CD8-positive, alpha-beta T cell (primary cell): ENCODE measurements at regions of chr22 and their contacts with region 1.

Region 1: DNA sequence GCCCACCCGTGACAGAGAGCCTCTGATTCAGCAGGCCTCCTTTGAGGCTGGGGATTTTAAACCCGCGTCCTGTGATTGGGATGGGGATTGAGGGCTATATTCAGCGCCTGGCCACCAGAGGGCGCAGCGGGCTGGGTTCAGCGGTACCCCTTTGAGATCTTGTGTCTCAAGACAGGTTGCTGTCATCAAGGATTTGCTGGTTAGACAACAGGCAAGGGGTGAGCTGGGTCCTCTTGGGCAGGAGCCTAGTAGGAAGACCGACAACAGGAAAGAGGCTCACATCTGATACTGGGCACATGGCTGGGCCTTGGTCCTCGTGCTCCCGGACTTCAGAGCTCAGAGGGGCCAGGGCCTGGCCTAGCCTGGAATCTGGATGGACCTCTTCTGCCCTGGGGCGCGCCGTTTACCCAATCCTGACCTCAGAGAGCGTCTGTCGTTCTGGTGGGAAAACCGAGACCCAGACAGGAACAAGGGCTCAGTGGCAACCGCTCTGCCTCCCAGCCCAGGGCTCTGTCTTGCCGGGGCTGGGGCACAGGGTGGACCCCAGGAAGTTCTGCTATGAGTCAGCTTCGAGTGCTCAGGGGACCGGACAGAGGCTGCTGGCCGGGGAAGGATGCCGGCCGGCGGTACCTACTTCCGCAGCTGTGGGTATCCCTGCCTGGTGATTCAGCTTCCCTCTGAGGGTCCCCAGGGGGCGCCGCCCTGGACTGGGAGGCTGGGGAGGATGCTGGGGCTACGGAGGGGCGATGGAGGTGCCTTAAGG is 929 bp upstream of the SLC35E4 start:
- DNase-seq: peak; percentile 75 to 95 (median 90)
- ATAC-seq: peak; percentile 64
- H3K4me3 ChIP-seq: peak overlapping the region; percentile 60 to 87
- H3K4me3 Mint-ChIP-seq: peak overlapping the region; percentile 81
- H3K27ac ChIP-seq: peak overlapping the region; percentile 32 to 89
- H3K27ac Mint-ChIP-seq: peak overlapping the region; percentile 91
- H3K4me1 ChIP-seq: peaks cover 31% of the 10 kb centered on the region
- H3K4me1 Mint-ChIP-seq: peaks cover 22% of the 10 kb centered on the region
- H3K27me3 ChIP-seq: no peaks in the 10 kb centered on the region
- H3K27me3 Mint-ChIP-seq: no peaks in the 10 kb centered on the region
- CTCF ChIP-seq: peak; percentile 80

Region 2: GRCh38 chr22:29603358-29604075 is 1031.1 kb before region 1 on chr22 and contains the start of gene NF2:
- CTCF ChIA-PET with region 1: no interaction called
- POLR2A ChIA-PET with region 1: no interaction called
- intact Hi-C with region 1: loop called in 1 of 2 experiments (anchors 2 kb)
- DNase-seq: peak; percentile 96 to 100 (median 98)
- ATAC-seq: peak; percentile 98
- H3K4me3 ChIP-seq: peak within 1 kb of the TSS; percentile 77 to 86
- H3K4me3 Mint-ChIP-seq: peak within 1 kb of the TSS; percentile 93
- H3K27ac ChIP-seq: peak within 1 kb of the TSS; percentile 84 to 90
- H3K27ac Mint-ChIP-seq: peak within 1 kb of the TSS; percentile 97
- H3K4me1 ChIP-seq: peaks cover 18% of the 10 kb centered on the region
- H3K4me1 Mint-ChIP-seq: peaks cover 25% of the 10 kb centered on the region
- H3K27me3 ChIP-seq: no peaks in the 10 kb centered on the region
- H3K27me3 Mint-ChIP-seq: no peaks in the 10 kb centered on the region
- CTCF ChIP-seq: no peak
- total RNA-seq, gene NF2: 22.6 to 23.2 TPM

Region 3: GRCh38 chr22:30606455-30607299 is 28.0 kb before region 1 on chr22 and contains the start of gene TCN2:
- CTCF ChIA-PET with region 1: interaction called, 12 read pairs
- POLR2A ChIA-PET with region 1: no interaction called
- intact Hi-C with region 1: no loop called
- DNase-seq: peak in 6 of 9 experiments; percentile 6 to 60 (median 24)
- ATAC-seq: peak; percentile 53
- H3K4me3 ChIP-seq: peak within 1 kb of the TSS; percentile 47 to 78
- H3K4me3 Mint-ChIP-seq: peak within 1 kb of the TSS; percentile 85
- H3K27ac ChIP-seq: no peak within 1 kb of the TSS
- H3K27ac Mint-ChIP-seq: no peak within 1 kb of the TSS
- H3K4me1 ChIP-seq: peaks cover 10% of the 10 kb centered on the region
- H3K4me1 Mint-ChIP-seq: peaks cover 18% of the 10 kb centered on the region
- H3K27me3 ChIP-seq: no peaks in the 10 kb centered on the region
- H3K27me3 Mint-ChIP-seq: no peaks in the 10 kb centered on the region
- CTCF ChIP-seq: no peak
- total RNA-seq, gene TCN2: 0.17 TPM in 1 of 2 experiments, not detected in the other

Region 4: GRCh38 chr22:30667494-30668385 is 33.1 kb after region 1 on chr22 and contains the start of gene DUSP18:
- CTCF ChIA-PET with region 1: interaction called, 22 read pairs
- POLR2A ChIA-PET with region 1: interaction called, 12 read pairs
- intact Hi-C with region 1: loop called (anchors 1 kb)
- DNase-seq: peak; percentile 88 to 98 (median 95)
- ATAC-seq: peak; percentile 90
- H3K4me3 ChIP-seq: peak within 1 kb of the TSS; percentile 73 to 87
- H3K4me3 Mint-ChIP-seq: peak within 1 kb of the TSS; percentile 96
- H3K27ac ChIP-seq: peak within 1 kb of the TSS; percentile 54 to 72
- H3K27ac Mint-ChIP-seq: peak within 1 kb of the TSS; percentile 94
- H3K4me1 ChIP-seq: peaks cover 11% of the 10 kb centered on the region
- H3K4me1 Mint-ChIP-seq: peaks cover 18% of the 10 kb centered on the region
- H3K27me3 ChIP-seq: no peaks in the 10 kb centered on the region
- H3K27me3 Mint-ChIP-seq: no peaks in the 10 kb centered on the region
- CTCF ChIP-seq: no peak
- total RNA-seq, gene DUSP18: 3.4 to 4.5 TPM

Region 5: GRCh38 chr22:30890686-30891442 is 256.2 kb after region 1 on chr22:
- CTCF ChIA-PET with region 1: interaction called, 22 read pairs
- POLR2A ChIA-PET with region 1: no interaction called
- intact Hi-C with region 1: no loop called
- DNase-seq: peak in 5 of 9 experiments; percentile 16 to 43 (median 30)
- ATAC-seq: peak; percentile 70
- H3K4me3 ChIP-seq: no peak overlapping the region
- H3K4me3 Mint-ChIP-seq: no peak overlapping the region
- H3K27ac ChIP-seq: no peak overlapping the region
- H3K27ac Mint-ChIP-seq: no peak overlapping the region
- H3K4me1 ChIP-seq: peaks cover 23% of the 10 kb centered on the region
- H3K4me1 Mint-ChIP-seq: peaks cover 23% of the 10 kb centered on the region
- H3K27me3 ChIP-seq: no peaks in the 10 kb centered on the region
- H3K27me3 Mint-ChIP-seq: no peaks in the 10 kb centered on the region
- CTCF ChIP-seq: peak; percentile 65

Region 6: GRCh38 chr22:31211862-31212730 is 577.4 kb after region 1 on chr22 and contains the start of gene LIMK2:
- CTCF ChIA-PET with region 1: interaction called, 4 read pairs
- POLR2A ChIA-PET with region 1: no interaction called
- intact Hi-C with region 1: loop called (anchors 1 kb)
- DNase-seq: peak; percentile 93 to 99 (median 97)
- ATAC-seq: peak; percentile 99
- H3K4me3 ChIP-seq: peak within 1 kb of the TSS; percentile 87 to 99
- H3K4me3 Mint-ChIP-seq: peak within 1 kb of the TSS; percentile 88
- H3K27ac ChIP-seq: peak within 1 kb of the TSS; percentile 50 to 80
- H3K27ac Mint-ChIP-seq: peak within 1 kb of the TSS; percentile 92
- H3K4me1 ChIP-seq: peaks cover 30% of the 10 kb centered on the region
- H3K4me1 Mint-ChIP-seq: peaks cover 45% of the 10 kb centered on the region
- H3K27me3 ChIP-seq: no peaks in the 10 kb centered on the region
- H3K27me3 Mint-ChIP-seq: no peaks in the 10 kb centered on the region
- CTCF ChIP-seq: peak; percentile 72
- total RNA-seq, gene LIMK2: 8.4 to 9.1 TPM